HEK293 (cell line): ENCODE measurements at regions of chr6 and their contacts with region 1.

Region 1: DNA sequence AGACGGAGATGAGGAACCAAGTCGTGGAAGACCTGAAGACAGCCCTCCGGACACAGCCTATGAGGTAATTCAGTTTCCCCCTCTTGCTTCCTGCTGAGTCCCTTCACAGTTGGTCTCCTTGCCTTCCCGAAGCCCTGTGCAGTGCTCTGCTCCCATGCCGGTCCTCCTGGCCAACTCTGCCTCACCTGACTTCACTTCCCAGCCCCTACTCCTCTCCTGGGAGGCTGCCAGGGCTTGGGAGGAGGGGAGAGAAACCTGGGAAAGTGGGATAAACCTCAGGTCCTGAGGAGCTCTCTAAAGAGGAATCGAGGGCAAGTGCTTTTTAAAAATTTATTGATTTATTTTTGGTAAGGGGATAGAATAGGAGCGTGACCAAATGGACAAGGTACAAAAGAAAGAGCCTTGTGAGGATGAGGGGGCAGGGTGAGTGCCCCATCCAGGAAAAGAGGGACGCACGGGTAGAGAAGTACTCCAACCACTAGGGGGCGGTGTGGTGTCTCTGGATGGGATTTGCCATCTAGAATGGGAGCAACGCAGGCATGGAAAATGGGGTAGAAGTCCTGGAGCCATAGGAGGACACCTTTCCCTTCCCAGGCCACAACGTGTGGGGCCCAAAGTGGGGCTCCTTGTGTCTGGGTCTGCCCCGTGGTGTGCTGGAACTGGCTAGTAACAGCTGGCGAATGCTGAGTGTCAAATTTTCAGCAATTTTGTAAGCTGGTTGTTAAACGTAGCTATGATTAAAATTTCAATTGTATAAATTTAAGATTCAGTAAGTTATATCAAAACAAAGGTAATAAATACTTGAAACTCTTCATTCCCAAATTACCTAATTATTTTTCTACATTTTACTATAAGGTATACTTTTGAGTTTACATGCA is 69.0 kb downstream of the MOCS1 start:
- H3K4me3 ChIP-seq: no peak overlapping the region
- H3K27ac ChIP-seq: no peak overlapping the region
- H3K4me1 ChIP-seq: no peaks in the 10 kb centered on the region
- CTCF ChIP-seq: peak; percentile 48

Region 2: GRCh38 chr6:39822846-39823815 is 42.1 kb before region 1 on chr6:
- CTCF ChIA-PET with region 1: interaction called, 10 read pairs
- POLR2A ChIA-PET with region 1: no interaction called
- H3K4me3 ChIP-seq: no peak overlapping the region
- H3K27ac ChIP-seq: no peak overlapping the region
- H3K4me1 ChIP-seq: peaks cover 11% of the 10 kb centered on the region
- CTCF ChIP-seq: no peak

Region 3: DNA sequence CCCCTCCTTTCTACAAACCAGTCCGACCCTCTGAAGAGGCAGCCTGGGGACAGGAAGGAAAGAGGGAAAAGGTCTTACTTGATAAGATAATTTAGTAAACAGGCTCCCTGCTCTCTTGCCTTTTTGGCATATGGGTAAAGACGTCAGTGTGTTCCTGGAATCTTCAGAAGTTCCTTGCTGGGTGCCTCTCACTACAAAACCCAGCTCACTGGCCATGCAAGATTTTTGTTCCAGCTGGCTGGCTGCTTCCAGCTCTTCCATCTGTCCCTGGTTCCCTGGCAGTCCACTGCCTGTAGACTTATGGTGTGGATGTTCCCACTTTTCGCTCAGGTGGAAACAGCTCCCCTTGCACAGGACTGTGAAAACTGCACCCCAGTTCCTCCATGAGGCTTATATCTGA is 11.6 kb after region 1 on chr6:
- CTCF ChIA-PET with region 1: interaction called, 60 read pairs
- POLR2A ChIA-PET with region 1: no interaction called
- H3K4me3 ChIP-seq: no peak overlapping the region
- H3K27ac ChIP-seq: no peak overlapping the region
- H3K4me1 ChIP-seq: no peaks in the 10 kb centered on the region
- CTCF ChIP-seq: no peak

Region 4: GRCh38 chr6:39892490-39893129 is 27.4 kb after region 1 on chr6:
- CTCF ChIA-PET with region 1: interaction called, 58 read pairs
- POLR2A ChIA-PET with region 1: no interaction called
- H3K4me3 ChIP-seq: no peak overlapping the region
- H3K27ac ChIP-seq: no peak overlapping the region
- H3K4me1 ChIP-seq: no peaks in the 10 kb centered on the region
- CTCF ChIP-seq: peak; percentile 66